Activated naive CD4-positive, alpha-beta T cell treated with anti-CD3 and anti-CD28 coated beads for 36 hours (primary cell): ENCODE measurements at regions of chr10 and their contacts with region 1.

Region 1: DNA sequence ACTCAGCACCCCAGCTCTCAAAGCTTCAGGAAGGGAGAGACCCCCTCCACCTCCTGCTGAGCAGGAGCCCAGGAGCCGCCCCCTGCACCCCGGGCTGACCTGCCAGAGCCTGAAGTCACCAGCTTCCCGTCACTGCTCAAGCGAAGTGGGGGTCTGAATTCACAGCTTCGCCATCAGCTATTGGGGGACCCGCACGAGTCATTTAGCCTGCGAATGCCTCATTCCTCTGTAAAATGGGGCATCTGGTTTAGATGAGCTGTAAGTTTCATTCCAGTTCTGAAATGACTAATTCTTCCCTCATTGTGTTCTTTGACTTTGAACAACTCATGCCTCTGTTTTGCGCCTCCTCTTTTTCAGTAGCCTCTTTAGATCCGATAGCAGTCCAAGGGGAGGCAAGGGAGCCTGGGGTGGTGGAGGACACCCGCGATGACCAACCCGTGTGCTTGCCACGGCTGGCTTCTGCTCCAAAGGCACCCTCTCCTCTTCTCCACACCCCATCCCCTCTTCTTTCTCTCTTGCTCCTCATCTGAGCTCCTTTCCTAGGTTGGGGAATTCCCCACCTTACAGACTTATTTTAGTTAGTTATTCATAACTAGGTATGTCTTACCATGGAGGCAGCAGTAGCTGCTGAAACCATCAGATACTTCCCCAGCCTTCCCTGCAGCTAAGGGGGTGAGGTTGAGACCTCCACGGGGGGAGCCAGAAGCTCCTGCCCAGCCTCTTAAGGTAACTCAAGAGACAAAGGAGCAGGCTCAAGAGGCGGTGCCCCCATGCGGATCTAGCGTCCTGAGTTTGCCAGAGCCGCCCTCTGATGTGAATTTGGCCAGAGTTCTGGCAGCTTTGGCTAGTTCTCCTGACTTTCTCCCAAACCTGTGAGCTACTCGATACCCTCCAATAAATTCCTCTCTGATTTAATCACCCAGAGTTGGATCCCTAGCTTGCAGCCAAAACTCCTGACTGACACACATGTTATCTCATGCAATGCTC is 47.7 kb downstream of the RBM17 start:
- DNase-seq: peak; percentile 89
- H3K4me3 Mint-ChIP-seq: peak overlapping the region; percentile 47
- H3K27ac Mint-ChIP-seq: peak overlapping the region; percentile 92
- H3K4me1 Mint-ChIP-seq: peaks cover 63% of the 10 kb centered on the region
- H3K27me3 Mint-ChIP-seq: peaks cover 4% of the 10 kb centered on the region

Region 2: GRCh38 chr10:6083523-6084475 is 52.7 kb before region 1 on chr10:
- CTCF ChIA-PET with region 1: interaction called, 12 read pairs
- intact Hi-C with region 1: loop called (anchors 2 kb)
- DNase-seq: peak; percentile 92
- H3K4me3 Mint-ChIP-seq: peak overlapping the region; percentile 67
- H3K27ac Mint-ChIP-seq: peak overlapping the region; percentile 90
- H3K4me1 Mint-ChIP-seq: peaks cover 61% of the 10 kb centered on the region
- H3K27me3 Mint-ChIP-seq: no peaks in the 10 kb centered on the region

Region 3: DNA sequence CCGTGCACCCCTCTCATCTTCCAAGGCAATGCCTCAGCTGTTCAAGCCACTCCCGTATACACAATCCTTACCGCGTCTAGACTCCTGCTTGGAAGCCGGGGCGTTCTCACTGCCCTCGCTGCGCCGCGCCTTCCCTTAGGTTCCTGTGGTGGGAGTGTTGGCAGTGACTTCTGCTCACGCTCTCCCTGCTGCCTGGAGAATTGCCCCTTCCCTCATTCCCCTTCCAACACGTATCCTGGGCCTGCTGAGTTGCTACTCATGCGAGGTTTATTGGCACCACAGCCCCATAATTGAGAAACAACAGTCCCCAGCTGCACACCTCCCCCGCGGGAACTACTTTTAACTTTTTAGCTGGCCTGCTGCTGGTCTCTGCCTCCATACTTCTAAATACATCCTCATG is 15.8 kb before region 1 on chr10:
- CTCF ChIA-PET with region 1: interaction called, 14 read pairs
- intact Hi-C with region 1: loop called (anchors 1 kb)
- DNase-seq: no peak
- H3K4me3 Mint-ChIP-seq: no peak overlapping the region
- H3K27ac Mint-ChIP-seq: no peak overlapping the region
- H3K4me1 Mint-ChIP-seq: peaks cover 31% of the 10 kb centered on the region
- H3K27me3 Mint-ChIP-seq: peaks cover 3% of the 10 kb centered on the region

Region 4: DNA sequence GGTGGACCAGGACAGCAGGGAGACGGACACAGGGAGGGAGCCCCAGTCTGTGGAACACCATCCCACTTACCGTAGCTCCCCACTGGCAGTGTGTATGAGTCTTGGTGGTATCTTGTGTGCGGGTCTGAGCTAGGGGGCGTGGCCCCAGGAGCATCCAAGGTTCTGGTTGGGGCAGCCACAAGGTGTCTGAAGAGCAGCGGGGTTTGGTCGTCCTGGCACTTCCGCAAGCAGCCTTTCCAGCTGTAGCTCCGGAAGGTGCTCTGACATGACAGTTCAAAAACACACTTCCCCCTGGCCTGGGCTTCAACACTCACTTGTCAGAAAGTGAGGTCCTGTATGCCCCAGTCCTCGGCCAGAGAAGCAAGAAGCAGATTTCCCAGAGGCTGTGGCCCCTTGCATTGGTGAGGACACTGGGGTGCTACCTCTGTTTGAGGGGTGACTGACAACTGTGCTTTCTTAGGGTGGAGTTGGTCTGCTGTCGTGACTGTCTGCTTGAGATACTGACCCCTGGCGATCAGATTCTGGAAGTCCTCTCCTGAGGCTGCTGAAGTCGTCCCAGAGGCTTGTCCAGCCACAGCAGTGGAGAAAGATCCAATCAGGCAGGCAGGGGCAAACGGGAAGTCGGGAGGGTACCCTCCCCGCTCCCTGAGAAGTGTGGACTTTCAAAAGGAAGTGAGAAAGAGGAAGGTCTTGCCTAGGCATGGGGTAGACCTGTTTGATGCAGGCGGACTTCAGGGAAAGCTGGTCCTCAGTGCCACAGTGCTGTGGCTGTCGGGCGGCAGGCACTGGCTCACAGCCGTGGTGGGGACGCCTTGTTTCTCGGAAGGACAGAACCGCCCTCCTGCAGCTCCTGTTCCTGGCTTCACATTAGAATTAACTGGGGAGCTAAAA is 14.8 kb after region 1 on chr10:
- CTCF ChIA-PET with region 1: interaction called, 16 read pairs
- intact Hi-C with region 1: no loop called
- DNase-seq: peak; percentile 71
- H3K4me3 Mint-ChIP-seq: peak overlapping the region; percentile 46
- H3K27ac Mint-ChIP-seq: peak overlapping the region; percentile 33
- H3K4me1 Mint-ChIP-seq: peaks cover 53% of the 10 kb centered on the region
- H3K27me3 Mint-ChIP-seq: no peaks in the 10 kb centered on the region

Region 5: GRCh38 chr10:6269953-6270867 is 133.7 kb after region 1 on chr10:
- CTCF ChIA-PET with region 1: no interaction called
- intact Hi-C with region 1: loop called (anchors 1 kb)
- DNase-seq: peak; percentile 90
- H3K4me3 Mint-ChIP-seq: peak overlapping the region; percentile 13
- H3K27ac Mint-ChIP-seq: peak overlapping the region; percentile 93
- H3K4me1 Mint-ChIP-seq: peaks cover 50% of the 10 kb centered on the region
- H3K27me3 Mint-ChIP-seq: no peaks in the 10 kb centered on the region

Region 6: DNA sequence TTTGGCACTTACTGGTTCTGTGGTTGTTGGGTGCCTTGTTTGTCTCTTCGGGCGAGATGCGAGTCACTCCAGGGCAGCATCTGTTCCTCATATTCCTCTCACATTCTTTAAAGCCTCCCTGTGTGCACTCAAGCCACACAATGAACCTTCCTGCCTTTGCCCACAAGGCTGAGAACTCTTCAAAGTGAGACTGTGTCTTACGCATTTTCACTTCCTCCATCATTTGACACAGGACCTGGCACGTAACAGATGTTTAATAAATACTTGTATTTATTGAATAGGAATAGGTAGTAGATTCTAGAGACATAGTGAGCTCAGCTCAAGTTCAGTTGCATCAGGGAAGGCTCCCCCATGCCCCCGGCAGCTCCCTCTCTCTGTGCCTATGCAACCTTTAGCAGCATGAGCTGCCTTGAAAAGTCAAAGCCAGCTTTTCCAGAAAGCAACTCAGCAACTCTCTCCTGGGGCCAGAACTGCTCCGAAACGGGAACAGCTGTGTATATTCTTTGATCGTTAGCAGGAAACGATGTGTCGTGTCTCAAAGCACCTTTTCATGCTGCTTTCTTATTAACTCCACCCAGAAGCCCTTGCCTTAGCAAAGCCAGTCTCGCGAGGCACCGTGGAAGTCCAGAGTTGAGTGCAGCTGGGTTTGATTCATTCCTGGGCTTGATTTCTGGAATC is 163.7 kb after region 1 on chr10:
- CTCF ChIA-PET with region 1: no interaction called
- intact Hi-C with region 1: loop called (anchors 1 kb)
- DNase-seq: peak; percentile 79
- H3K4me3 Mint-ChIP-seq: peak overlapping the region; percentile 35
- H3K27ac Mint-ChIP-seq: peak overlapping the region; percentile 91
- H3K4me1 Mint-ChIP-seq: peaks cover 51% of the 10 kb centered on the region
- H3K27me3 Mint-ChIP-seq: no peaks in the 10 kb centered on the region

Region 7: DNA sequence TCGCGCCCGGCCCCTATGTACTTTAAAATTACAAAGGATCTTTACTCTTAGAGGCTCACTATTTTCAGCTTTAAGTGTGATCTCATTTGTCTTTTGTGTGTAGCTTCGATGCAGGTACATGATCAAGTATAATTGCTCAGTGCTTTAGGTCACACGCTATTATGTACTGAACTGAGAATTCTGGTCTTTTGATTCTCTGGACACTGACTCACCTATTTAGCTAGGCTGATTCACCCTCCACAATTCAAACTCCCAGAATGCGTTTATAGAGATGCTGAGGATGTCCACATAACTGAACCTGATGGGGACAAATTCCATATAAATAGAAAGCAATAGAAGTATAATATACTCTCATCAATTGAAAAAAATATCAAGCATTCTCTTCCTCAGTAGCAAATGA is 385.7 kb after region 1 on chr10:
- CTCF ChIA-PET with region 1: no interaction called
- intact Hi-C with region 1: no loop called
- DNase-seq: no peak
- H3K4me3 Mint-ChIP-seq: no peak overlapping the region
- H3K27ac Mint-ChIP-seq: no peak overlapping the region
- H3K4me1 Mint-ChIP-seq: peaks cover 74% of the 10 kb centered on the region
- H3K27me3 Mint-ChIP-seq: no peaks in the 10 kb centered on the region